ENCODE measurements at regions of chr19 and their contacts with region 1.

Region 1: DNA sequence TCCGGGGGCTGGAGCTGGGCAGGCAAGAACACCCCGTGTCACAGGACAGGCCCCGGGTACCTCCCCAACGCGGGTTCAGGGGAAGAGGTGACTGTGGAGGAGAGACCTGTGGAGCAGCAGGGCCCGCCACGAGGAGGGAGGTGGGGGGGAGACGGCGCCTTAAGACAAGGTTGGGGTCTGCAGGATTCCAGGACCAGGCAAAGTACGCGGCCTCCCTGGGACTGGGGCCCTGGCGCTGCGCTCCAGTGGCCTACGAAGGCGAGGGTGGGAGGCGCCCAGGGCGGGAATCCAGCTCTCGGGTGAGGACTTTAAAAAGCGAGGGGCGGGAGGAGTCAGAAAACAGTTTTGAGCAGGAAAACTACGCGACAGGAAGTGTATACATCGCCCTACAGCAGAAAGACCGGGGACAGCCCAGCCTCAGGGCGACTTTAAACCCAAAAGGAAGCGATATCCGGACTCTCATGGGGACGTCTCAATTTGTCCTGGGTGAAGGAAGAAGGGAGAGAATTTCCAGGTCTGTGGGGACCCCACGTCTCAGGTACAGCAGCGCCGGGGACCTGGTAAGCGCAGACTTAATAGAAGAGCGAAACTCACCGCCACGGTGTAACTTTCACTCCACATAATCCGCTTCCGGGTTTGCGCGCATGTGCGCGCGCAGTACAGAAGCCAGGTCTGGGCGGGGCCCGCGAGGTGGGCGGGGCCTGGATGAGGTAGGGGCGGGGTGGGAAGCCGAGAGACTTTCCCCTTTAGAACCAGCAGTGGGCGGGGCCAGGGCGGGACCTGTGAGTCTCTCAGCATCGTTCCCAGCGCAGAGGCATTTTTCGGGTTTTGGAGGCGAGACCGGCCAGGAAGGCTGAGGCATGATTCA is at the start of gene ZNF83:
- DNase-seq: peak; percentile 85 to 99 (median 94)
- ATAC-seq: peak; percentile 95
- H3K4me3 ChIP-seq: peak within 1 kb of the TSS; percentile 75
- H3K4me3 Mint-ChIP-seq: peak within 1 kb of the TSS; percentile 92
- H3K27ac ChIP-seq: peak within 1 kb of the TSS; percentile 77 to 82
- H3K27ac Mint-ChIP-seq: peak within 1 kb of the TSS; percentile 93
- H3K4me1 ChIP-seq: peaks cover 21% of the 10 kb centered on the region
- H3K4me1 Mint-ChIP-seq: peaks cover 40% of the 10 kb centered on the region
- H3K27me3 ChIP-seq: no peaks in the 10 kb centered on the region
- H3K27me3 Mint-ChIP-seq: no peaks in the 10 kb centered on the region
- CTCF ChIP-seq: no peak
- total RNA-seq, gene ZNF83: 58.7 to 60.2 TPM

Region 2: GRCh38 chr19:52269338-52270261 is 368.4 kb before region 1 on chr19 and contains the start of gene ZNF766:
- CTCF ChIA-PET with region 1: no interaction called
- POLR2A ChIA-PET with region 1: no interaction called
- intact Hi-C with region 1: loop called in 1 of 2 experiments (anchors 2 kb)
- DNase-seq: peak; percentile 93 to 99 (median 97)
- ATAC-seq: peak; percentile 98
- H3K4me3 ChIP-seq: peak within 1 kb of the TSS; percentile 100
- H3K4me3 Mint-ChIP-seq: peak within 1 kb of the TSS; percentile 97
- H3K27ac ChIP-seq: peak within 1 kb of the TSS; percentile 95 to 97
- H3K27ac Mint-ChIP-seq: peak within 1 kb of the TSS; percentile 90
- H3K4me1 ChIP-seq: peaks cover 38% of the 10 kb centered on the region
- H3K4me1 Mint-ChIP-seq: peaks cover 46% of the 10 kb centered on the region
- H3K27me3 ChIP-seq: no peaks in the 10 kb centered on the region
- H3K27me3 Mint-ChIP-seq: no peaks in the 10 kb centered on the region
- CTCF ChIP-seq: no peak
- total RNA-seq, gene ZNF766: 39.3 to 43.2 TPM

Region 3: GRCh38 chr19:52397310-52398080 is 240.5 kb before region 1 on chr19 and contains the start of gene ZNF528:
- CTCF ChIA-PET with region 1: no interaction called
- POLR2A ChIA-PET with region 1: no interaction called
- intact Hi-C with region 1: loop called in 1 of 2 experiments (anchors 5 kb)
- DNase-seq: peak; percentile 84 to 95 (median 92)
- ATAC-seq: peak; percentile 97
- H3K4me3 ChIP-seq: peak within 1 kb of the TSS; percentile 71
- H3K4me3 Mint-ChIP-seq: peak within 1 kb of the TSS; percentile 93
- H3K27ac ChIP-seq: peak within 1 kb of the TSS; percentile 25 to 62
- H3K27ac Mint-ChIP-seq: peak within 1 kb of the TSS; percentile 93
- H3K4me1 ChIP-seq: peaks cover 20% of the 10 kb centered on the region
- H3K4me1 Mint-ChIP-seq: peaks cover 20% of the 10 kb centered on the region
- H3K27me3 ChIP-seq: no peaks in the 10 kb centered on the region
- H3K27me3 Mint-ChIP-seq: no peaks in the 10 kb centered on the region
- CTCF ChIP-seq: no peak
- total RNA-seq, gene ZNF528: 16.3 to 16.9 TPM

Region 4: DNA sequence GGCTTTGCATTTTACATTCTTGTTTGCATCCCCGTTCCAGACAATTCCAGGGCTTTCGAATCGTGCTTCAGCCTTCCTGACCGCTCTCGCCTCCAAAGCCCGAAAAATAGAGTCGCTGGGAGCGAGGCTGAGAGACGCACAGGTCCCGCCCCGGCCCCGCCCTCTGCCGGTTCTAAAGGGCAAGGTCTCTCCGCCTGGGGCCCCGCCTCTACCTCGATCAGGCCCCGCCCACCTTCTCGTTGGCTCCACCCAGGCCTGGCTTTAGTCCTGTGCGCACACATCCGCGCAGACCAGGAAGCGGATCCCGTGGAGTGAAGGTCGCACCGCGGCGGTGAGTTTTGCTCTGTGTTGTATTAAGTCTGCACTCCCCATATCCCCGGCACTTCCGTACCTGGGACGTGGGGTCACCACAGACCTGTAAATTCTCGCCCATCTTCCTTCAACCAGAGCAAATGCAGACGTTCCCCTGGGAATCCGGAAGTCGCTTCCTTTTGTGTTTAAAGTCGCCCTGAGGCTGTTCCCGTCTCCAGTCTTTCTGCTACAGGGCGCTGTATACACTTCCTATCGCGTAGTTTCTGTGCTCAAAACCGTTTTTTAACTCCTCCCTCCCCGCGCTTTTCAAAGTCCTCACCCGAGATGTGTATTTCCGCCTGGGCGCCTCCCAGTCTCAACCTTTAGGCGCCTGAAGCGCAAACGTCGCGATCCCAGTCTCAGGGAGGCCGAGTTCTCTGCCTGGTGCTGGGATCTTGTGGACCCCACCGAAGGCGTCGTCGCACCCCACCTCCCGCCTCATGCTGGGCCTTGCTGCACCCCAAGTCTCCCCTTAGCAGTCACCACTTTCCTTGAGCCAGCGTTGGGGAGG is 67.7 kb before region 1 on chr19 and contains the start of gene ZNF701:
- CTCF ChIA-PET with region 1: no interaction called
- POLR2A ChIA-PET with region 1: interaction called, 3 read pairs
- intact Hi-C with region 1: loop called in 1 of 2 experiments (anchors 2 kb)
- DNase-seq: peak; percentile 92 to 98 (median 95)
- ATAC-seq: peak; percentile 97
- H3K4me3 ChIP-seq: peak within 1 kb of the TSS; percentile 93
- H3K4me3 Mint-ChIP-seq: peak within 1 kb of the TSS; percentile 87
- H3K27ac ChIP-seq: peak within 1 kb of the TSS; percentile 77 to 87
- H3K27ac Mint-ChIP-seq: peak within 1 kb of the TSS; percentile 84
- H3K4me1 ChIP-seq: peaks cover 20% of the 10 kb centered on the region
- H3K4me1 Mint-ChIP-seq: peaks cover 37% of the 10 kb centered on the region
- H3K27me3 ChIP-seq: no peaks in the 10 kb centered on the region
- H3K27me3 Mint-ChIP-seq: no peaks in the 10 kb centered on the region
- CTCF ChIP-seq: peak; percentile 36
- total RNA-seq, gene ZNF701: 7.9 to 8.2 TPM

Region 5: GRCh38 chr19:52601025-52601973 is 36.7 kb before region 1 on chr19:
- CTCF ChIA-PET with region 1: no interaction called
- POLR2A ChIA-PET with region 1: no interaction called
- intact Hi-C with region 1: loop called (anchors 2 kb)
- DNase-seq: peak; percentile 87 to 97 (median 93)
- ATAC-seq: peak; percentile 99
- H3K4me3 ChIP-seq: peak overlapping the region; percentile 94
- H3K4me3 Mint-ChIP-seq: peak overlapping the region; percentile 89
- H3K27ac ChIP-seq: peak overlapping the region; percentile 35 to 68
- H3K27ac Mint-ChIP-seq: peak overlapping the region; percentile 86
- H3K4me1 ChIP-seq: peaks cover 26% of the 10 kb centered on the region
- H3K4me1 Mint-ChIP-seq: peaks cover 45% of the 10 kb centered on the region
- H3K27me3 ChIP-seq: no peaks in the 10 kb centered on the region
- H3K27me3 Mint-ChIP-seq: no peaks in the 10 kb centered on the region
- CTCF ChIP-seq: peak; percentile 66

Region 6: GRCh38 chr19:52690369-52691214 is 52.6 kb after region 1 on chr19:
- CTCF ChIA-PET with region 1: no interaction called
- POLR2A ChIA-PET with region 1: interaction called, 3 read pairs
- intact Hi-C with region 1: loop called in 1 of 2 experiments (anchors 2 kb)
- DNase-seq: peak; percentile 82 to 97 (median 90)
- ATAC-seq: peak; percentile 95
- H3K4me3 ChIP-seq: peak overlapping the region; percentile 82
- H3K4me3 Mint-ChIP-seq: peak overlapping the region; percentile 90
- H3K27ac ChIP-seq: peak overlapping the region; percentile 58 to 71
- H3K27ac Mint-ChIP-seq: peak overlapping the region; percentile 89
- H3K4me1 ChIP-seq: peaks cover 21% of the 10 kb centered on the region
- H3K4me1 Mint-ChIP-seq: peaks cover 34% of the 10 kb centered on the region
- H3K27me3 ChIP-seq: no peaks in the 10 kb centered on the region
- H3K27me3 Mint-ChIP-seq: no peaks in the 10 kb centered on the region
- CTCF ChIP-seq: no peak